IMR-90 (cell line): ENCODE measurements at regions of chr5 and their contacts with region 1.

Region 1: GRCh38 chr5:132866342-132867045 is at the starts of genes GDF9 and UQCRQ:
- DNase-seq: peak; percentile 100
- ATAC-seq: peak; percentile 99
- H3K4me3 ChIP-seq: peak within 1 kb of the TSS; percentile 81
- H3K27ac ChIP-seq: peak within 1 kb of the TSS; percentile 73
- H3K4me1 ChIP-seq: peaks cover 3% of the 10 kb centered on the region; the same call in 1 of the 2 replicates
- H3K27me3 ChIP-seq: no peaks in the 10 kb centered on the region
- CTCF ChIP-seq: peak; percentile 46
- POLR2A ChIP-seq: peak; percentile 95
- RAD21 ChIP-seq: peak; percentile 52
- total RNA-seq, gene GDF9: 0.18 and 0.28 TPM in 2 replicates
- total RNA-seq, gene UQCRQ: 69.7 and 73.7 TPM in 2 replicates

Region 2: GRCh38 chr5:132506094-132506692 is 360.3 kb before region 1 on chr5:
- CTCF ChIA-PET with region 1: no interaction called
- POLR2A ChIA-PET with region 1: no interaction called
- dilution Hi-C with region 1: no loop called
- in situ Hi-C with region 1: no loop called
- intact Hi-C with region 1: loop called (anchors 5 kb)
- DNase-seq: peak; percentile 98
- ATAC-seq: peak; percentile 91
- H3K4me3 ChIP-seq: no peak overlapping the region
- H3K27ac ChIP-seq: peak overlapping the region; percentile 99
- H3K4me1 ChIP-seq: peaks cover 26% of the 10 kb centered on the region
- H3K27me3 ChIP-seq: no peaks in the 10 kb centered on the region
- CTCF ChIP-seq: peak; percentile 85
- POLR2A ChIP-seq: no peak
- RAD21 ChIP-seq: peak; percentile 65

Region 3: DNA sequence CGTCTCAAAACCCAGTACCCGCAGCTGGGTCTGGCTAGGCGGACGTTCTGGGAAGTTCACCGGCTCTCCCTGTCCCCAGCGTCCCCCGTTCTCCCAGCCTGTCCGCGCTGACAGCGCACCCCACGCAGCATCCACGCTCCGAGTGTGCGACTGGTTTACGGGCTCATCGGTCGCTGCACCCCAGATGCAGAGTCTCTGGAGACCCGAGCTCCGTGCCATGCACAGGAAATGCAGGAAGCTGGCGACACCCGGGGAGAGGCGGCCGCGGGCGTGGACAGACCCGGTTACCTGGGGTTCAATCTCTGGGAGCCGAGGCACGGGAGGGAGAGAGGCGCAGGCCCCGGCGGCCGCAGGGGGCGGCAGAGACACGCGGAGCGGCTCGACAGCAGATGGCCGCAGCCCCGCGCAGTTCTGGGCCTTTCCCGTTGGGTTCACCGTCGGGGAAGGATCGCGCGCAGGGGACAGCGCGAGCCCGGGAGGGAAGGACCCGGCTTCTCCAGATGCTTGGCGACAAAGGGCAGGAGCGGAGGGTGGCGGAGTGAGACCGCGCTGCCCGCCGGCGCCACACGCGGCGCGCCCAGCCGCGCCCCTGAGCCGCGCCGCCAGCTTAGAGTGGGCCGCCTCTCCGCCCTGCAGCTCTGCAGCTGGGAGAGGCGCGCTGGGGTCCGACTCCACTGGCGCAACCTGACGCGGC is 36.6 kb before region 1 on chr5:
- CTCF ChIA-PET with region 1: interaction called, 5 read pairs
- POLR2A ChIA-PET with region 1: no interaction called
- dilution Hi-C with region 1: no loop called
- in situ Hi-C with region 1: no loop called
- intact Hi-C with region 1: loop called (anchors 1 kb)
- DNase-seq: peak; percentile 56
- ATAC-seq: peak; percentile 91
- H3K4me3 ChIP-seq: peak overlapping the region; percentile 84
- H3K27ac ChIP-seq: peak overlapping the region; percentile 52; the same call in 1 of the 2 replicates
- H3K4me1 ChIP-seq: peaks cover 4% of the 10 kb centered on the region; the same call in 1 of the 2 replicates
- H3K27me3 ChIP-seq: no peaks in the 10 kb centered on the region
- CTCF ChIP-seq: peak; percentile 88
- POLR2A ChIP-seq: peak; percentile 24; the same call in 1 of the 2 replicates
- RAD21 ChIP-seq: peak; percentile 82

Region 4: DNA sequence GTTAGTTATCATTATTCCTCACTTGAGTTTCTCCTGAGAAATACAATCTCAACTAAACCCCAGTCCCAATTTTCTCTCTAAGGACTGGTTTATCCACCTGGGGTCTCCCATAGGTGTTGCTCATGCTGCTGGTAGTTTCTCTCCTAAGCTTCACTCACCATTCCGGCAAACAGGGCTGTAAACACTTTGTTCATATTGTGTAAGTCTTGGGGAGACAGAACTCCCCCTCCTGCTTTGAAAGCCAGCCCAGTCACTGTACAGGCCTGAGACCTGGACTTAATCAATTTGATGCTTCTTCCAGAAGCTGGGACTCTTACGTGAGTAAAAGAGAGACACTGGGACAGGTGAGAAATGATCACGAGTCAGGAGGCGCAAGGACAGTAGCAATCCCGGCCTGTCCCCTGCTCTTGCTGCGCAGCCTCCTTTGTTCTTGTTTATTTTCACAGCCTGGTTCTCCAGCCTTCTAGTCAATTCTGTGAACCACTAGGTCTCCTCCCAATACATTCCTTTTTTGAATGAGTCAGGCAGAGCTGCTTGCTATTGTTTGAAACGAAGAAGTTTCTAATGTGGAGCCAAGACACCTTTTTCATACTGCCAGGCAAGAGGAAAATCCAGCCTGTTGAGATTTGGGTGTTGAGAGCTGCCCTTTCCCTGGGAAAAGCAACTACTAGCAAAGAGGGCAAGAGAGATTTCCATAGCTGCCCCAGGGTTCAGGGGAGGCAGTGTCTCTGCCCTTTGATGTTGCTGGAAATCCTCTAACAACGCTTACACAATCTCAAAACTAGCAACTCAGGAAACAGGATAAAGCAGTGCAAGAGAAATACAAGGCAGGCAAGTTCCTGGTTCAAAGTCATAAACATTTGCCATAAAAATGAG is 26.8 kb before region 1 on chr5:
- CTCF ChIA-PET with region 1: no interaction called
- POLR2A ChIA-PET with region 1: interaction called, 12 read pairs
- dilution Hi-C with region 1: no loop called
- in situ Hi-C with region 1: no loop called
- intact Hi-C with region 1: no loop called
- DNase-seq: peak; percentile 87
- ATAC-seq: peak; percentile 97
- H3K4me3 ChIP-seq: no peak overlapping the region
- H3K27ac ChIP-seq: peak overlapping the region; percentile 95
- H3K4me1 ChIP-seq: peaks cover 19% of the 10 kb centered on the region
- H3K27me3 ChIP-seq: no peaks in the 10 kb centered on the region
- CTCF ChIP-seq: no peak
- POLR2A ChIP-seq: no peak
- RAD21 ChIP-seq: no peak

Region 5: DNA sequence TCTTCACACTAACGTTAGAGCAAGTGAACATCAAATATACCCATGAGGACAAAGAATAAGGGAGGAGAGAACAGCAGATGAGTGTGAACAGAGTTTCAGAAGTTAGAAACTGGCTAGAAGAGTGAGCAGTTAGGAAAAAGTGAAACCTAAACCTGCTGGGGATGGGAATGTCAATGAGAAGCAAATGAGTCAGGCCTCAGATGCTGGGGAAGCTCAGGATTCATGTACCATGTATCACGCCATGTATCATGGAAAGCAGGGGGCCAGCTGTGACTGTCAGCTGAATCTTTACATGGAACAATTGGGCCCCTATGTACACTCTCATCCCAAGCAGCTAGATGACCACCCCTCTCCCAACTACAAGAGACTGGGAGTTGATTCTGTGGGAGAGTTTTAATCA is 16.4 kb before region 1 on chr5:
- CTCF ChIA-PET with region 1: no interaction called
- POLR2A ChIA-PET with region 1: no interaction called
- dilution Hi-C with region 1: no loop called
- in situ Hi-C with region 1: no loop called
- intact Hi-C with region 1: loop called (anchors 1 kb)
- DNase-seq: peak; percentile 84
- ATAC-seq: peak; percentile 90
- H3K4me3 ChIP-seq: no peak overlapping the region
- H3K27ac ChIP-seq: no peak overlapping the region
- H3K4me1 ChIP-seq: peaks cover 3% of the 10 kb centered on the region; the same call in 1 of the 2 replicates
- H3K27me3 ChIP-seq: no peaks in the 10 kb centered on the region
- CTCF ChIP-seq: no peak
- POLR2A ChIP-seq: no peak
- RAD21 ChIP-seq: no peak